GM12878 (cell line): ENCODE measurements at regions of chr7 and their contacts with region 1.

Region 1: DNA sequence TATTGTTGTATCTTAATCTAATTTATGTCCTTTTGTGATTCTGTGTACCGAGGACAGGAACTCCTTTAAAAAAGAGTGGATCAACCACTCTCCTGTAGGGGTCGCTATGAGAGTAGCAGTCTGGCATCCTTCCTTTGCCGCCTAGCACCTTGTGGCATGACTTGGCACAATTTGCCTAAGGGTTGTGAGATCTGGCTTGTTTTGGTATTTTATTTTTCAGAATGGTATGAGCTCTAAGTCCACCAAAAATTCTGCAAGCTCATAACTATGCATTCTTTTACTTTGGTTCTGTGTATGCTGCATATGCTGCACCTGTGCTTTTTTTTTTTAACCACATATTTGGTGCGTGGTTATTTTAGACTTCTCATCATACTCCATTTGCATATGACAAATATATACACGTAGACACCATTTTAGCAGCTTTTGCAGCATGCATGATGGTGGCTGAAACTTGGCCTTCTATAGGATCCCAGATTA is 112.8 kb downstream of the CDK14 start:
- DNase-seq: peak; percentile 67
- ATAC-seq: peak; percentile 71
- H3K4me3 ChIP-seq: peak overlapping the region; percentile 64
- H3K27ac ChIP-seq: peak overlapping the region; percentile 78
- H3K4me1 ChIP-seq: peaks cover 7% of the 10 kb centered on the region
- H3K27me3 ChIP-seq: no peaks in the 10 kb centered on the region
- CTCF ChIP-seq: peak; percentile 84 to 93 (median 88)
- EP300 ChIP-seq: no peak
- POLR2A ChIP-seq: no peak
- RAD21 ChIP-seq: peak; percentile 89

Region 2: GRCh38 chr7:89966067-89966665 is 742.7 kb before region 1 on chr7:
- CTCF ChIA-PET with region 1: no interaction called
- POLR2A ChIA-PET with region 1: no interaction called
- RAD21 ChIA-PET with region 1: no interaction called
- SMC1A ChIA-PET with region 1: no interaction called
- in situ Hi-C with region 1: no loop called
- intact Hi-C with region 1: no loop called
- DNase-seq: no peak
- ATAC-seq: no peak
- H3K4me3 ChIP-seq: no peak overlapping the region
- H3K27ac ChIP-seq: no peak overlapping the region
- H3K4me1 ChIP-seq: no peaks in the 10 kb centered on the region
- H3K27me3 ChIP-seq: no peaks in the 10 kb centered on the region
- CTCF ChIP-seq: no peak
- EP300 ChIP-seq: no peak
- POLR2A ChIP-seq: no peak
- RAD21 ChIP-seq: no peak

Region 3: DNA sequence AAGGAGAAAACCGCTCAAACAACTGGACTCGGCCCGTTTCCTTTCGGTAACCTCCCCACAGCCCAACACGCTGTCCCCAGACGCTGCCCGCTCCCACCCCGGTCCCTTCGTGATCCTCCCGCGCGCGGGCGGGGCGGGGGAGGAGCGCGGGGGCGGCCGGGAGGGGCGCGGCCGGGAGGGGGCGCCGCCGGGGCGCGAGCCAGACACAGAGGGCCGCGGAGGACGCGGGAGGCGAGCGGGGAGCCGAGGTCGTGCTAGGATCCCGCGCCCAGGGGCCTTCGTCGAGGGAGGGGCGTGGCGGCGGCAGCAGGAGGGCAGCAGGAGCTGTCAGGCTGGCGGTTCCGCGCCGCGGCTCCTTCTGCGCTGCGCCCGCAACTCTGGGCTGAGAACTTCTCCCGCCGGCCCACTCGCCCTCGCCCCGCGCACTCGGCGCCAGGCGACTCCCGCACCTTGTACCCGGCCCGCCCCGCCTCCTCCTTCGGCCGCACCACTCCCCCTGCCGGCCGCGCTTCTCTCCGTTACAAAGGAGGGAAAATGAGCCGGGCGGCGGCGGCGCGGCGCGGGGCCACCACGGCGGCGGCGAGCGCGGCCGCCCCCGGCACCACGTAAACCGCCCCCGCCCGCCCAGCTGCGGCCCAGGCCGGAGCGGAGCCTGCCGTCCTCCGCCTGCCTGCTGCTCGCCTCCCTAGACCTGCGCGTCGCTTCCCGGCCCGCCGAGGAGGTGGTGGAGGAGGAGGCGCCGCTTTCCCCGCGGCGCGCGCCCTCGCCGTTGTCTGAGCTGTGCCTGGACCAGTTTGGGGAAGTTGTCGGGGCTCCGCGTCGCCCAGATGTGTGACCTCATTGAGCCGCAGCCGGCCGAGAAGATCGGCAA is 112.8 kb before region 1 on chr7 and contains the start of gene CDK14:
- CTCF ChIA-PET with region 1: interaction called, 10 read pairs
- POLR2A ChIA-PET with region 1: interaction called, 5 read pairs
- RAD21 ChIA-PET with region 1: interaction called, 9 read pairs
- SMC1A ChIA-PET with region 1: interaction called, 5 read pairs
- in situ Hi-C with region 1: no loop called
- intact Hi-C with region 1: loop called (anchors 5 kb)
- DNase-seq: no peak
- ATAC-seq: peak; percentile 58
- H3K4me3 ChIP-seq: peak within 1 kb of the TSS; percentile 92
- H3K27ac ChIP-seq: peak within 1 kb of the TSS; percentile 55
- H3K4me1 ChIP-seq: peaks cover 10% of the 10 kb centered on the region
- H3K27me3 ChIP-seq: no peaks in the 10 kb centered on the region
- CTCF ChIP-seq: peak in 2 of 3 experiments; percentile 29 to 33; a peak in 3 of 6 replicates
- EP300 ChIP-seq: no peak
- POLR2A ChIP-seq: peak; percentile 78
- RAD21 ChIP-seq: peak; percentile 44; the same call in 1 of the 2 replicates
- polyA plus RNA-seq, gene CDK14: 6.5 to 7.3 TPM

Region 4: GRCh38 chr7:90726623-90727022 is 17.7 kb after region 1 on chr7:
- CTCF ChIA-PET with region 1: interaction called, 60 read pairs
- POLR2A ChIA-PET with region 1: interaction called, 25 read pairs
- RAD21 ChIA-PET with region 1: interaction called, 41 read pairs
- SMC1A ChIA-PET with region 1: interaction called, 181 read pairs
- in situ Hi-C with region 1: no loop called
- intact Hi-C with region 1: no loop called
- DNase-seq: no peak
- ATAC-seq: peak; percentile 38
- H3K4me3 ChIP-seq: peak overlapping the region; percentile 20; the same call in 1 of the 2 replicates
- H3K27ac ChIP-seq: peak overlapping the region; percentile 47; the same call in 1 of the 2 replicates
- H3K4me1 ChIP-seq: peaks cover 10% of the 10 kb centered on the region
- H3K27me3 ChIP-seq: no peaks in the 10 kb centered on the region
- CTCF ChIP-seq: no peak
- EP300 ChIP-seq: no peak
- POLR2A ChIP-seq: no peak
- RAD21 ChIP-seq: no peak

Region 5: GRCh38 chr7:90759710-90760109 is 50.8 kb after region 1 on chr7:
- CTCF ChIA-PET with region 1: interaction called, 26 read pairs
- POLR2A ChIA-PET with region 1: interaction called, 4 read pairs
- RAD21 ChIA-PET with region 1: interaction called, 15 read pairs
- SMC1A ChIA-PET with region 1: interaction called, 18 read pairs
- in situ Hi-C with region 1: no loop called
- intact Hi-C with region 1: no loop called
- DNase-seq: no peak
- ATAC-seq: no peak
- H3K4me3 ChIP-seq: no peak overlapping the region
- H3K27ac ChIP-seq: no peak overlapping the region
- H3K4me1 ChIP-seq: peaks cover 11% of the 10 kb centered on the region
- H3K27me3 ChIP-seq: no peaks in the 10 kb centered on the region
- CTCF ChIP-seq: no peak
- EP300 ChIP-seq: no peak
- POLR2A ChIP-seq: no peak
- RAD21 ChIP-seq: no peak

Region 6: DNA sequence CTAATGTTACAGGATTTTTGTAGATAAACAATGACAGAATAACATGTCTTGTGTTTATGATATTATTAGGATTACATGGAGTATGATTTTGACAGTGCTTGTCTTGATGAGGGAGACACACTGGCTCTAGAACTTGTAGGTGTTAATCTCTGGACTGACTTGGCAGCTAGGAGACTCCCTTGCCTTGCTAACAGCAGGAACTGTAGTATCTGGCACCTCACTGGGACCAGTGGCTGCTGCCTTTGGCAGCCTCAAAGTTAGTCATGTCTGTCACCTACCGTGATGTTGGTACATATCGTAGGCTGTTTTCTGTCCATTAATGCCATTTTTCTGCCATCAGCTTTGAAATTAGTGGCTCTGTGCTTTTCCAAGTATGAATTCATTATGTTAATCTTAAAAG is 148.7 kb after region 1 on chr7:
- CTCF ChIA-PET with region 1: interaction called, 6 read pairs
- POLR2A ChIA-PET with region 1: interaction called, 3 read pairs
- RAD21 ChIA-PET with region 1: interaction called, 17 read pairs
- SMC1A ChIA-PET with region 1: interaction called, 9 read pairs
- in situ Hi-C with region 1: no loop called
- intact Hi-C with region 1: no loop called
- DNase-seq: no peak
- ATAC-seq: peak; percentile 44
- H3K4me3 ChIP-seq: no peak overlapping the region
- H3K27ac ChIP-seq: no peak overlapping the region
- H3K4me1 ChIP-seq: peaks cover 6% of the 10 kb centered on the region
- H3K27me3 ChIP-seq: no peaks in the 10 kb centered on the region
- CTCF ChIP-seq: peak in 1 of 3 experiments; percentile 35; a peak in 1 of 6 replicates
- EP300 ChIP-seq: no peak
- POLR2A ChIP-seq: no peak
- RAD21 ChIP-seq: no peak

Region 7: DNA sequence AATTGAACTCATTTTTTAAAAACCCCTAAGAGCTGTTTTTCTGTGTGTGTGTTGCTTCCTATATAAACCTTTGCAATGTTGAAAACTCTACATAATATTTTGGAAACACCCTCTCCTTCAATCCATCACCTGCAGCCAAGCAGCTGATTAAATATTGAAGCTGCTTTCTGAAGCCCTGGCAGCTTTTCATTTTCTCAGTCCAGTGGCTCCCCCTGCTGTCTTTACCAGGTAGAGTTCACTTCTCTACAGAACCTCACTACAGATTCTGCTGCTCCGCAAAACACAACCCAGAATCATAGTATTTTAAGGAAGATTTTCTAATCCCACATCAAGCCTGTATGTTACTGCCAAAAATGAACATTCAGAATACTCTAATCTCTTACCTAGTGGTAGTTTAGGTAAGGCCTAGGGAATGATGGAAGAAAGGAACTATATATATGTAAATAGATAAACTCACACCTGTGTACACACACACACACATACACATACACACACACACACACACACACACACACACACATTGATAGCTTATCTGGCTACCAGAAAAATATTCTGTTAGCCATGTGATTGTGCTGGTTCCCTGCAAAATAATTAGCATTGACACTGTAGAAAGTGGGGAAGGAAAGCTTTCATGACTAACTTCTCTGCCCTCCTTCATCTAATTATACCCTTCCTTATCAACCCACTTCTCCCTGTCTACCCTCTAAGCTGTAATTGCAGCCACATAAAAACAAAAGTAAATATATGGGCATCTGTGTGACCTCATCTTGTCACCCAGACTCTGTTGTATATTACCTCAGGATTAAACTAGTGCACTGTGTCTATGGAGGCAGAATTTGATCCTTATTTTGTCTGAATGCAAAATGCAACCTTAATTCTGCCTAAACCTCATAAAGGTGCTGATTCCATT is 325.8 kb after region 1 on chr7:
- CTCF ChIA-PET with region 1: interaction called, 271 read pairs
- POLR2A ChIA-PET with region 1: interaction called, 11 read pairs
- RAD21 ChIA-PET with region 1: interaction called, 132 read pairs
- SMC1A ChIA-PET with region 1: interaction called, 176 read pairs
- in situ Hi-C with region 1: no loop called
- intact Hi-C with region 1: loop called (anchors 1 kb)
- DNase-seq: no peak
- ATAC-seq: peak; percentile 89
- H3K4me3 ChIP-seq: no peak overlapping the region
- H3K27ac ChIP-seq: no peak overlapping the region
- H3K4me1 ChIP-seq: no peaks in the 10 kb centered on the region
- H3K27me3 ChIP-seq: no peaks in the 10 kb centered on the region
- CTCF ChIP-seq: peak; percentile 64 to 78 (median 65)
- EP300 ChIP-seq: no peak
- POLR2A ChIP-seq: no peak
- RAD21 ChIP-seq: peak; percentile 95